ENCODE measurements at regions of chr5 and their contacts with region 1.

Region 1: GRCh38 chr5:62354028-62354874 is 48.2 kb downstream of the KIF2A start:
- DNase-seq: peak; percentile 51
- ATAC-seq: peak; percentile 68
- H3K4me3 ChIP-seq: no peak overlapping the region
- H3K27ac ChIP-seq: no peak overlapping the region
- H3K4me1 ChIP-seq: no peaks in the 10 kb centered on the region
- H3K27me3 ChIP-seq: no peaks in the 10 kb centered on the region
- CTCF ChIP-seq: peak; percentile 50
- EP300 ChIP-seq: no peak
- POLR2A ChIP-seq: no peak
- RAD21 ChIP-seq: peak; percentile 20; the same call in 1 of the 2 replicates

Region 2: GRCh38 chr5:62297026-62297425 is 57.2 kb before region 1 on chr5:
- CTCF ChIA-PET with region 1: interaction called, 5 read pairs
- POLR2A ChIA-PET with region 1: no interaction called
- in situ Hi-C with region 1: no loop called
- intact Hi-C with region 1: loop called (anchors 1 kb)
- DNase-seq: no peak
- ATAC-seq: no peak
- H3K4me3 ChIP-seq: no peak overlapping the region
- H3K27ac ChIP-seq: no peak overlapping the region
- H3K4me1 ChIP-seq: no peaks in the 10 kb centered on the region
- H3K27me3 ChIP-seq: 0 out of 5 replicates have a peak, but pooled peaks cover 0 to 3% of the 10 kb centered on the region in 2 experiments
- CTCF ChIP-seq: no peak
- EP300 ChIP-seq: no peak
- POLR2A ChIP-seq: no peak
- RAD21 ChIP-seq: no peak

Measured in HepG2 (cell line).